Breast epithelium (tissue), 4 donors: ENCODE measurements at regions of chr7 and their contacts with region 1.

Region 1: DNA sequence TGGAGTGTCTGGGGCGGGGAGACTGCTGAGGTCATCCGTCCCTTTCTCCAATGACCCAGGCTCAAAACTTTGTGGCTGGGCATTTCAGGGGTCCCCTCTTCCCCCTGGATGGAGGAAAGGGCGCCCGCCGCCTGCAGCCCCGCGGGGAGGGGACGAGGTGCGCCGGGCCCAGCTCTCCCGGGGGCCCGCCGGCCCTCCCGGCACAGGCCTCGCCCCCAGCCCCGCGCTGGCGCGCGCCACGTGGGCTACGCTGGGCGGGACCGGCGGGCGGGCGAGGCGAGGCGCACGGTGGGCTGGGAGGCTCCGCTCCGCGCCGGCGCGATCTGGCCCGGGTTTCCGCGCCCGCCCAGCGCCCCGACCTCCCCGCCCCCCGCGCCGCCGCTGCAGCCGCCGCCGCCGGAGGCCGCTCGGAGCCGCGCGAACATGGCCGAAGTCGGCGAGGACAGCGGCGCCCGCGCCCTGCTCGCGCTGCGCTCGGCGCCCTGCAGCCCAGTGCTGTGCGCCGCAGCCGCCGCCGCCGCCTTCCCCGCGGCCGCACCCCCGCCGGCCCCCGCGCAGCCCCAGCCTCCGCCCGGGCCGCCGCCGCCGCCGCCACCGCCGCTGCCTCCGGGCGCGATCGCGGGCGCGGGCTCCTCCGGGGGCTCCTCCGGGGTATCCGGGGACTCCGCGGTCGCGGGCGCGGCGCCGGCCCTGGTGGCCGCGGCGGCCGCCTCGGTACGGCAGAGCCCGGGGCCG is at the start of gene FOXK1:
- DNase-seq: peak; percentile 44 to 78
- H3K4me3 ChIP-seq: peak within 1 kb of the TSS; percentile 86 to 93 (median 90)
- H3K27ac ChIP-seq: peak within 1 kb of the TSS; percentile 91 to 96
- H3K4me1 ChIP-seq: peaks cover 2 to 7% of the 10 kb centered on the region in 2 donors
- H3K27me3 ChIP-seq: no peaks in the 10 kb centered on the region
- CTCF ChIP-seq: no peak
- POLR2A ChIP-seq: no peak
- total RNA-seq, gene FOXK1: 11.7 to 16.5 (median 15.7) TPM

Region 2: GRCh38 chr7:3326246-3326645 is 1355.8 kb before region 1 on chr7:
- intact Hi-C with region 1: no loop called
- DNase-seq: no peak
- H3K4me3 ChIP-seq: no peak overlapping the region
- H3K27ac ChIP-seq: no peak overlapping the region
- H3K4me1 ChIP-seq: no peaks in the 10 kb centered on the region
- H3K27me3 ChIP-seq: no peaks in the 10 kb centered on the region
- CTCF ChIP-seq: no peak
- POLR2A ChIP-seq: no peak

Region 3: DNA sequence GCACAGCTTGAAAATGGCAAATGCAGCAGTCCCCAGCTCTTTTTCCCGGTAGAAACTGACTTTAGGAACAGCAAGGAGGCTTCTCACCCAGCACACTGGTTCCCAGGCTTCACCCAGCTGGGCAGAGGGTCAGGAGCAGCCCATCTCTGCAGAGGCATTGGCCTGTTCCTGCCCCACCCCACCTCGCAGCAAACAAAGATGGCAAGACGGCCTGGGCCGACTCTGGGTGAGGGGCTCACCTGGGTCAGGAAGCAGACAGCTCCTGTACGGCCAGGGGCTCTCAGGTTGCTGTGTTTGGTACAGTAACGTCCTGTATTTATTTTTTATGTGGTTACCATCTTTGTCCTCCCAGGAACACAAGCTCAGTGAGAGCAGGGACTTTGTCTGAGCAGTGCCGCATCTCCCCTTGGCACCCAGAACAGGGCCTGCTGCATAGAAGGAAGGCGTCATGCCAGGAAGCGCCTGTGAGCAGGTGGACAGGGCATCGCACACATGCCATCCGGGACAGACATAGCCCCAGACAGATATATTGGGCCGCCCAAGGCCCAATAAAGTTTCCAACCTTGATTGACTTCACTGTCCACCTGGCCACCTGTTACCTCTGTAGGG is 584.9 kb before region 1 on chr7:
- intact Hi-C with region 1: no loop called
- DNase-seq: no peak
- H3K4me3 ChIP-seq: no peak overlapping the region
- H3K27ac ChIP-seq: no peak overlapping the region
- H3K4me1 ChIP-seq: no peaks in the 10 kb centered on the region
- H3K27me3 ChIP-seq: no peaks in the 10 kb centered on the region
- CTCF ChIP-seq: no peak
- POLR2A ChIP-seq: no peak

Region 4: GRCh38 chr7:4762121-4763055 is 80.3 kb after region 1 on chr7:
- intact Hi-C with region 1: loop called (anchors 5 kb)
- DNase-seq: no peak
- H3K4me3 ChIP-seq: no peak overlapping the region
- H3K27ac ChIP-seq: no peak overlapping the region
- H3K4me1 ChIP-seq: no peaks in the 10 kb centered on the region
- H3K27me3 ChIP-seq: no peaks in the 10 kb centered on the region
- CTCF ChIP-seq: no peak
- POLR2A ChIP-seq: no peak